A673 (cell line): ENCODE measurements at regions of chr9 and their contacts with region 1.

Region 1: GRCh38 chr9:37602817-37603216 is 10.4 kb upstream of the TOMM5 start:
- DNase-seq: no peak
- H3K4me3 ChIP-seq: no peak overlapping the region
- H3K27ac ChIP-seq: no peak overlapping the region
- H3K4me1 ChIP-seq: no peaks in the 10 kb centered on the region
- H3K27me3 ChIP-seq: peaks cover 11% of the 10 kb centered on the region
- CTCF ChIP-seq: no peak

Region 2: DNA sequence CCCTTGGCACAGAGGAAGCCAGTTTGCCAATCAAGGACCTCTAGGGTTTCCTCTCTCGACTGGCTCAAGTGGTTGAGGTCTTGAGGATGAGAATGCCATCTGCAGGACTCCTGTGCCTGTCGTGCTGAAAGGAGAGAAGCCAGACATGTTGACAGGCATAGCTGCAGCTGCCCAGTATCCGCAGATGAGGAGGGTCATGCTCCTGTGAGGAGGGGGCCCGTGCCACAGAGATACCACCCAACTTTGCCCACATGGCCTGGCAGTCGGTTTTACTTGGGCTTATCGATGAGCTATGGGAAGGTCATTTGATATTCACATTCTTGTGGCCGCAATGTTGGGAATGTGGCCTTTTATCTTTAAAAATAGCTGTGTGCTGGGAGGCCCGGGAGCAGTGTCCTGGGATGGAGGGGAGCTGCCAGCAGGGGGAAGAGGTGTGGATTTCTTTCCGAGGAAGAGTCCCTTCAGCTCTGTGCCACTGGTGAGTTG is 65.3 kb after region 1 on chr9:
- CTCF ChIA-PET with region 1: no interaction called
- POLR2A ChIA-PET with region 1: no interaction called
- intact Hi-C with region 1: loop called (anchors 10 kb)
- DNase-seq: no peak
- H3K4me3 ChIP-seq: no peak overlapping the region
- H3K27ac ChIP-seq: no peak overlapping the region
- H3K4me1 ChIP-seq: no peaks in the 10 kb centered on the region
- H3K27me3 ChIP-seq: peaks cover 38% of the 10 kb centered on the region
- CTCF ChIP-seq: 0 out of 2 replicates have a peak, but pooled peaks have one; percentile 24